Mammary epithelial cell (primary cell): ENCODE measurements at regions of chr17 and their contacts with region 1.

Region 1: DNA sequence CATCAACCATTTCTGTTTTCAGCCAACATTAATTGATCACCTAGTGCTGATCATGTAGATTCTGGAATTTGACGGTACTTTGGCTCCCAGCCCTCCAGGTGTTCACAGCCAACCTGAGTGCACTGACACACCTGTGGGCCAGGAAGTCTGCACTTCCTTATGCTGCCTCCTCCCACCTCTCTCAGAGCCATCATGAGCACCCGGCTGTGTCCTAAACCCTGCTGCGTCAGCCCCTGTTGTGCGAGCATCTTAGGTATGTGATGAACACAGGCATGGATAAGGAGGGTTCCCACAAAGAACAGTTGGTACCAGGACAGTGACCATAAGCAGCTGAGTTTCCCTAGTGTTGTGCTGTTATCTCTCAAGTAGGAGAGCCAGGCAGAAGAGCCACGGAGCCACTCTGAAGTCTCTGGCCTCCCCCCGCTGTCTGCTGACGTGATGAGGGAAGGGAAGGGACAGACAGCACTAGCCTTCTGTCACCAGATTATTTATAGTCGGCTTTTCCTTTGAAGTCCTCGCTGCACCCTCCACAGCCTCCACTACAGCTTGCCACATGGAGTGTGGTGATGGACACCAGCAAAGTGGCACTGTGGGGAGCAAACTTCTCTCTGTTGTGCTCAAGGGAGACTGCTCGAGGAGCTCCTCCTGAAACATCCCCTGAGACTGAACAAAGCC is 162.8 kb upstream of the ANKFN1 start:
- DNase-seq: no peak
- H3K4me3 ChIP-seq: no peak overlapping the region
- H3K27ac ChIP-seq: no peak overlapping the region
- H3K4me1 ChIP-seq: no peaks in the 10 kb centered on the region
- H3K27me3 ChIP-seq: no peaks in the 10 kb centered on the region
- CTCF ChIP-seq: no peak

Region 2: DNA sequence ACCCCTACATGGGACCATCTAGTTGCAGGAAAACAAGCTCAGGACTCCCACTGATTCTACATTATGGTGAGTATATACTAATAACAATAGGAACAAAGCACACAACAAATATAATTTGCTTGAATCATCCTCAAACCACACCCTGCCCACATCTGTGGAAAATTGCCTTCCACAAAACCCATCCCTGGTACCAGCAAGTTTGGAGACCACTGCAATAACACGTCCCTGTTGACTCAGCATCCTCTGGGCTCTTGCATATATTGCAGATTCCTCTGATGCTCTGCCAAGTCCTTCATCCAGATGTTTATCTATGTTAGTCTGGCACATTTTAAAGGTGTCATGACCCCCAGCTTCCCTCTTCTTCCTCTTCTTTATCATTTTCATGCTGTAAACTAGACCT is 101.2 kb before region 1 on chr17:
- CTCF ChIA-PET with region 1: no interaction called
- dilution Hi-C with region 1: loop called (anchors 5 kb)
- in situ Hi-C with region 1: no loop called
- intact Hi-C with region 1: no loop called
- DNase-seq: peak; percentile 16
- H3K4me3 ChIP-seq: no peak overlapping the region
- H3K27ac ChIP-seq: no peak overlapping the region
- H3K4me1 ChIP-seq: no peaks in the 10 kb centered on the region
- H3K27me3 ChIP-seq: peaks cover 5% of the 10 kb centered on the region
- CTCF ChIP-seq: no peak